ENCODE measurements at regions of chr6 and their contacts with region 1.

Region 1: GRCh38 chr6:157488716-157489118 is 107.7 kb downstream of the ZDHHC14 start:
- DNase-seq: peak; percentile 79 to 92 (median 87)
- ATAC-seq: peak; percentile 95
- H3K4me3 ChIP-seq: peak overlapping the region; percentile 4; the same call in 1 of the 2 replicates
- H3K27ac ChIP-seq: 0 out of 3 replicates have a peak overlapping the region, but pooled peaks have one; percentile 25
- H3K4me1 ChIP-seq: peaks cover 24 to 26% of the 10 kb centered on the region in 2 experiments; a peak in 4 of 5 replicates
- H3K27me3 ChIP-seq: no peaks in the 10 kb centered on the region
- CTCF ChIP-seq: no peak
- EP300 ChIP-seq: peak; percentile 80
- POLR2A ChIP-seq: no peak
- RAD21 ChIP-seq: no peak

Region 2: GRCh38 chr6:157779705-157780604 is 291.2 kb after region 1 on chr6:
- CTCF ChIA-PET with region 1: interaction called, 10 read pairs
- POLR2A ChIA-PET with region 1: no interaction called
- in situ Hi-C with region 1: no loop called
- intact Hi-C with region 1: no loop called
- DNase-seq: no peak
- ATAC-seq: no peak
- H3K4me3 ChIP-seq: no peak overlapping the region
- H3K27ac ChIP-seq: no peak overlapping the region
- H3K4me1 ChIP-seq: peaks cover 5 to 6% of the 10 kb centered on the region in 2 experiments; a peak in 3 of 5 replicates
- H3K27me3 ChIP-seq: no peaks in the 10 kb centered on the region
- CTCF ChIP-seq: no peak
- EP300 ChIP-seq: no peak
- POLR2A ChIP-seq: no peak
- RAD21 ChIP-seq: no peak

Region 3: DNA sequence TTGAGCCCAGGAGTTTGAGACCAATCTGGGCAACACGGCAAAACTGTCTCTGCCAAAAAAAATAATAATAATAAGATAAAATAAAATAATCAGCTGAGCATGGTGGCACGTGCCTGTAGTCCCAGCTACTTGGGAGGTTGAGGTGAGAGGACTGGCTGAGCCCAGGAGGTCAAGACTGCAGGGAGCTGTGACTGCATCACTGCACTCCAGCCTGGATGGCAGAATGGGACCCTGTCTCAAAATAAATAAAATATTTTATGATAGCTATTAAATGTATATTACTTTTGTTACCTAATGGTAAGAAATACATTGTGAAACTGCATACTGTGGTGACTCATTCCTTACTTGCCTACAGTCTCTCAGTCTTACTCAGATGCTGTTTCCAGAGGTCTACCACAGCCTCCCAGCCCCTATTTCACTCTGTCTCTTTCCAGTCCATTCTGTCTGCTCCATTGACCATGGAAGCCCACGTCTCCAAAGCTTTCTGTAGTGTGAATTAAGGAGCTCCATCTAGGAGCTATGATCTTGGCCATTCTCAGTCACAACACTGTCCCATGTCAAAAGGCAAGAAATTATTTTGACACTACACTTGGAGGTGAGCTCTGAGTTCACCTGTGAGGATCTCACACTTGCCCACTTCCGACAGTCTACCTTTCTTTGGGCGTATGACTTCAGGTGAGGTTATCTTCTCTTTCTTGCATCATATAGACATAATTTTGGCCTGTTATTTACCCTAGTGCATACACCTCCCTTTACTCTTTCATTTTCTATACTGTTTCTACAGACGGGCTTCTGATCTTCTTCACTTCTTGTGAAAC is 311.9 kb after region 1 on chr6:
- CTCF ChIA-PET with region 1: no interaction called
- POLR2A ChIA-PET with region 1: no interaction called
- in situ Hi-C with region 1: no loop called
- intact Hi-C with region 1: no loop called
- DNase-seq: no peak
- ATAC-seq: peak; percentile 34
- H3K4me3 ChIP-seq: no peak overlapping the region
- H3K27ac ChIP-seq: no peak overlapping the region
- H3K4me1 ChIP-seq: peaks cover 8 to 13% of the 10 kb centered on the region in 2 experiments; a peak in 3 of 5 replicates
- H3K27me3 ChIP-seq: no peaks in the 10 kb centered on the region
- CTCF ChIP-seq: no peak
- EP300 ChIP-seq: no peak
- POLR2A ChIP-seq: no peak
- RAD21 ChIP-seq: no peak

Measured in K562 (cell line).